PC-9 (cell line): ENCODE measurements at regions of chr2 and their contacts with region 1.

Region 1: GRCh38 chr2:175880-176800 is 87.7 kb downstream of the SH3YL1 start:
- DNase-seq: no peak
- H3K4me3 ChIP-seq: no peak overlapping the region; the same call in 1 of the 2 replicates
- H3K27ac ChIP-seq: peak overlapping the region; percentile 53
- H3K4me1 ChIP-seq: peaks cover 28% of the 10 kb centered on the region
- H3K27me3 ChIP-seq: no peaks in the 10 kb centered on the region
- CTCF ChIP-seq: no peak

Region 2: DNA sequence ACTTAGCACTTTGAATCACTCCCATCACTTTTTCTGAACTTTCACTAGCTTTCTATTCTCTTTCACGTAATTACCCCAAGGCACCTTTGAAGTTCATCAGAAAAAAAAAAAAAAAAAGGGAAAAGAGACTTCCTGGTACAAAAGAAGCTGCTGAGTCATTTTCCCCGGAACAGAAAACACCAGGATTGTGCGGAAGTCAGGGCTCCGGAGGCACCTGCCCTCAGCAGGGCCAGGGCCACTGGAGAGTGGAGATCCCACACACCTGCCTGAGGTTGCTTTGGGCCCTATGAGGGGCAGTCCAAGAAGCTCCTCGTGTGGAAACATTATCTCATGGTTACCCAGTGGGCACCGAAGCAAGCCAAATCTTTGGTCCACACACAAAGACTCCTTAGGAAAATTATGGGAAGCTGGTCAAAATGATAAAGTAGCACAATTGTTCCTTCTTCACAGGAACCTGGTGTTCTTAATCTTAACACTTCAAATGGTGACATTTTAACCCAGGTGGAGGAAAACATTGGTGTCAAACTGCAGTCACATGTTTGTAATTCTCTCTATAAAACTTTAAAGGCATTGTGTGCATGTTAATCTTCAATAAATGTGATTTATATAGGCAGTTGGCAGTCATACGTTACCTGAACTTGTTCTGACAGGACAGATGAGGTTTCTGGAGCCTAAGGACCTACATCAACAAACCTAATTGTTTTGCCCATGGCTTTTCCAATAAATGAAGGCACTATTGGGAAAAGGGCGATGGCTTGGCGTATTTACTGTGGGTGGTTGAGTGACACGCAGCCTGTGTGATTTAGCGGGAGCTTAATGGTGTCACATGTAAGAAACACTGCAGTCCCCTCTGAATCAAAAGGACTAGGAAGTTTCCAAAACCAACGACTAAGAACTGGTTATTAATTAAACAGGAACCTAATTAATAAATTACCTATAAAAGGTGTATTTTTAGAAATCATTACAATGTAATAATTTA is 106.5 kb before region 1 on chr2:
- CTCF ChIA-PET with region 1: no interaction called
- POLR2A ChIA-PET with region 1: interaction called, 31 read pairs
- intact Hi-C with region 1: no loop called
- DNase-seq: peak; percentile 48 to 68
- H3K4me3 ChIP-seq: no peak overlapping the region
- H3K27ac ChIP-seq: peak overlapping the region; percentile 61
- H3K4me1 ChIP-seq: peaks cover 28% of the 10 kb centered on the region
- H3K27me3 ChIP-seq: no peaks in the 10 kb centered on the region
- CTCF ChIP-seq: no peak

Region 3: GRCh38 chr2:101016-101415 is 75.1 kb before region 1 on chr2:
- CTCF ChIA-PET with region 1: no interaction called
- POLR2A ChIA-PET with region 1: no interaction called
- intact Hi-C with region 1: no loop called
- DNase-seq: no peak
- H3K4me3 ChIP-seq: no peak overlapping the region
- H3K27ac ChIP-seq: no peak overlapping the region
- H3K4me1 ChIP-seq: no peaks in the 10 kb centered on the region
- H3K27me3 ChIP-seq: no peaks in the 10 kb centered on the region
- CTCF ChIP-seq: no peak

Region 4: DNA sequence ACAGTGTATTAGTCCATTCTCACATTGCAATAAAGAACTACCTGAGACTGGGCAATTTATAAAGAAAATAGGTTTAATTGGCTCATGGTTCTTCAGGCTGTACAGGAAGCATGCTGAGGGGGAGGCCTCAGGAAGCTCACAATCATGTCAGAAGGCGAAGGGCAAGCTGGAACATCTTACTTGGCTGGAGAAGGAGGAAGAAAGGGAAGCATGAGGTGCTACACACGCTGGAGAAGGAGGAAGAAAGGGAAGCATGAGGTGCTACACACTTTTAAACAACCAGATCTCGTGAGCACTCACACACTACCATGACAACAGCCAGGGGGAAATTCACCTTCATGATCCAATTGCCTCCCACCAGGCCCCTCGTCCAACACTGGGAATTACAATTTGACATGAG is 34.5 kb before region 1 on chr2:
- CTCF ChIA-PET with region 1: no interaction called
- POLR2A ChIA-PET with region 1: no interaction called
- intact Hi-C with region 1: loop called (anchors 1 kb)
- DNase-seq: no peak
- H3K4me3 ChIP-seq: no peak overlapping the region
- H3K27ac ChIP-seq: no peak overlapping the region
- H3K4me1 ChIP-seq: peaks cover 5% of the 10 kb centered on the region; the same call in 1 of the 2 replicates
- H3K27me3 ChIP-seq: no peaks in the 10 kb centered on the region
- CTCF ChIP-seq: no peak

Region 5: DNA sequence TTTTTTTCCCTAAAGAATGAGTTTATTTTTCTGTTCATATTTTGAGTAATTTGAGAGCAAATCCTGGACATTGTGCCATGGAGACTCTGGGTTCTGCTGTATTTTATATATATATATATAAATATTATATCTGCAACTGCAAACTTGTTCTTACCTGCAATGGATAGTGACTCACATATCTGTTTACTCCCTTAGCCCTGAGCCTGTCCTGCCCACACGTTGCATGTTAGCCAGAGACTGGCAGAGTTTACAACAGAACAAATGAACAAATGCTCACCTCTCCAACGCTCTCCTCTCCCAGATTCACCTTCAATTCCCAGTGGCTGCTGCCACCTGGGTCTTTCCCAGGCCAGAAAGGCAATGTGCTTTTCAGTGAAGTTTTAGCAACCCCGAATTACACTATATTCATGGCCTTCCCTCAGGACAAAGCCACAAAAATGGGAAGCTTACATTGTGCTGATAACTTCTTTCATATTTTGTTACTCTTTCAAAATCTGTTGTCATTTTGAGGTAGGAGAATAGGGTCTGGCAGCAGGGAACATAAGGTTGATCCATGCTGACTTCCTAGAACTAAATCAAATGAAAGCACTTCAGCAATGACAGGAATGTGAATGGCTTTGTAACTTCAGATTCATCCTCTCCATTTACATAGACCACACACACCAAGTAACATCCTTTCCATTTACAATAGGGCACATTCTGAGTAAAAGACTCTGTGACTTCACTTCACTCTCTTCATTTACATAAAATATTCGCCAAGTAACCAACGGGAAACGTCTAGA is 24.4 kb before region 1 on chr2:
- CTCF ChIA-PET with region 1: no interaction called
- POLR2A ChIA-PET with region 1: no interaction called
- intact Hi-C with region 1: no loop called
- DNase-seq: no peak
- H3K4me3 ChIP-seq: no peak overlapping the region
- H3K27ac ChIP-seq: no peak overlapping the region
- H3K4me1 ChIP-seq: no peaks in the 10 kb centered on the region
- H3K27me3 ChIP-seq: no peaks in the 10 kb centered on the region
- CTCF ChIP-seq: no peak

Region 6: GRCh38 chr2:636641-637405 is 460.7 kb after region 1 on chr2:
- CTCF ChIA-PET with region 1: no interaction called
- POLR2A ChIA-PET with region 1: no interaction called
- intact Hi-C with region 1: loop called (anchors 2 kb)
- DNase-seq: peak; percentile 41 to 43
- H3K4me3 ChIP-seq: no peak overlapping the region
- H3K27ac ChIP-seq: no peak overlapping the region
- H3K4me1 ChIP-seq: peaks cover 8% of the 10 kb centered on the region
- H3K27me3 ChIP-seq: no peaks in the 10 kb centered on the region
- CTCF ChIP-seq: peak; percentile 93